ENCODE measurements at regions of chr6 and their contacts with region 1.

Region 1: GRCh38 chr6:133707456-133707855 is 181.5 kb upstream of the TCF21 start:
- DNase-seq: no peak

Region 2: GRCh38 chr6:133674661-133675060 is 32.8 kb before region 1 on chr6:
- intact Hi-C with region 1: no loop called
- DNase-seq: no peak

Region 3: GRCh38 chr6:133817460-133818047 is 110.1 kb after region 1 on chr6:
- intact Hi-C with region 1: loop called in 1 of 2 experiments (anchors 5 kb)
- DNase-seq: no peak